PC-3 (cell line): ENCODE measurements at regions of chr3 and their contacts with region 1.

Region 1: DNA sequence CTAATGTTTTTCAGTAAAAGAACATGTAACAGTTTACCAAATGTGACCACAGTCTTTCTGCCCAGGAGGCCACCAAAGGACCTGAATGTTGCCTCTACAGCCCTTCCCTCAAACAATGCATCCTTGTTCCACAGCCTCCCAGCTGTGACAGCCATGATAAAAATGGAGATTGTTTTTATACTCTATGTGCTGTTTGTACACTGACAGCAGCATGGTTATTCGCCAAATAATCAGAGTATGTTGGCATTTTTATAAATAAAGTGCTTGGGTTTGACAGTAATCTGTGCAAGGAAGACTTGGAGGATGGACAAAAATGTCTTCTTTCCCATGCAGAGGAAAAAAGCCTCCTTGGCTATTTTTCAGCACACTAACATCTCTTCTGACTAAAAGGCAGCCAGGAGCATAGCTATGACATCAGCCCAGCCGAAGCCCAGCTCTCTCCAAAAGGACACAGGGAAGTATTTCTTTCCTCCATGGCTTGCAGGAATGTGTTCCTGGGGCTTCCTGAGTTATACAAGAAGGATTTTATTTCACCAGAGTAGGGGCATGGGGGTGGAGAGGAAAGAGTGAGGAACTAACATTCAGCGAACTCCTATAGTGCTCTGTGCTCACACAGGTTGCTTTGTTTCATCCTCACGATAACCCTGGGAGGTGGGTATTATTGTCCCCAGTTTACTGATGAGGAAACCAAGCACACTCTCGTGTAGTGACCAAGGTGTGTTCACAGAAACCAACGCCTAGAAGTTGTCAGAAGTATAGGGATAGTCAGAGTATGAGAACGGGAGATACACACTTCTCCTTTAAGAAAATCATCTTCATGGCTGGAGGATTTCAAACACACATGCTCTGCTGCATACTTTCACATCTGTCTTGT is 339.7 kb downstream of the MECOM start:
- DNase-seq: no peak
- ATAC-seq: no peak
- H3K4me3 ChIP-seq: no peak overlapping the region
- H3K27ac ChIP-seq: no peak overlapping the region
- H3K4me1 ChIP-seq: peaks cover 34% of the 10 kb centered on the region
- H3K27me3 ChIP-seq: no peaks in the 10 kb centered on the region
- CTCF ChIP-seq: no peak

Region 2: DNA sequence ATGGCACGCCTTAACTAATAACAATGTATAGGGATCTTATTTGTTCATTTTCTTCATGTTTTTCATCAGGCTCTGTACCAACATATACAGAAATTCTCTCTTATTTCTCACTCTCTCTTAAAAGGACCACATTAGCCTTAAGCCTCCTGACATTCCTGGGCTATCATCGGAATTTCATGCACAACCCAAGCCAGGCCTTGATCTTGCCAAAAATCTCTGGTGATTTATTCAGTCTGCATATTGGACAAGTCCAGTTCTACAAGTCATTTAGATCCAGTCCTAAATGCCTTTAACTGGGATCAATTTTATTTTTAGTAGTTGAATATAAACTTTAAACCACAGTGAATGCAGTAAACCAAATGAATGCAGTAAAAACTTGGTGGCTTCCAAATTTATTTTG is 45.7 kb before region 1 on chr3:
- CTCF ChIA-PET with region 1: no interaction called
- POLR2A ChIA-PET with region 1: interaction called, 5 read pairs
- intact Hi-C with region 1: loop called (anchors 1 kb)
- DNase-seq: no peak
- ATAC-seq: no peak
- H3K4me3 ChIP-seq: no peak overlapping the region
- H3K27ac ChIP-seq: no peak overlapping the region
- H3K4me1 ChIP-seq: peaks cover 29% of the 10 kb centered on the region
- H3K27me3 ChIP-seq: no peaks in the 10 kb centered on the region
- CTCF ChIP-seq: no peak

Region 3: GRCh38 chr3:169305460-169305859 is 18.4 kb before region 1 on chr3:
- CTCF ChIA-PET with region 1: no interaction called
- POLR2A ChIA-PET with region 1: no interaction called
- intact Hi-C with region 1: no loop called
- DNase-seq: no peak
- ATAC-seq: no peak
- H3K4me3 ChIP-seq: no peak overlapping the region
- H3K27ac ChIP-seq: no peak overlapping the region
- H3K4me1 ChIP-seq: peaks cover 4% of the 10 kb centered on the region; the same call in 1 of the 2 replicates
- H3K27me3 ChIP-seq: no peaks in the 10 kb centered on the region
- CTCF ChIP-seq: no peak

Region 4: GRCh38 chr3:169334991-169335390 is 11.2 kb after region 1 on chr3:
- CTCF ChIA-PET with region 1: no interaction called
- POLR2A ChIA-PET with region 1: interaction called, 25 read pairs
- intact Hi-C with region 1: no loop called
- DNase-seq: no peak
- ATAC-seq: no peak
- H3K4me3 ChIP-seq: no peak overlapping the region
- H3K27ac ChIP-seq: no peak overlapping the region
- H3K4me1 ChIP-seq: peaks cover 37% of the 10 kb centered on the region
- H3K27me3 ChIP-seq: no peaks in the 10 kb centered on the region
- CTCF ChIP-seq: no peak

Region 5: DNA sequence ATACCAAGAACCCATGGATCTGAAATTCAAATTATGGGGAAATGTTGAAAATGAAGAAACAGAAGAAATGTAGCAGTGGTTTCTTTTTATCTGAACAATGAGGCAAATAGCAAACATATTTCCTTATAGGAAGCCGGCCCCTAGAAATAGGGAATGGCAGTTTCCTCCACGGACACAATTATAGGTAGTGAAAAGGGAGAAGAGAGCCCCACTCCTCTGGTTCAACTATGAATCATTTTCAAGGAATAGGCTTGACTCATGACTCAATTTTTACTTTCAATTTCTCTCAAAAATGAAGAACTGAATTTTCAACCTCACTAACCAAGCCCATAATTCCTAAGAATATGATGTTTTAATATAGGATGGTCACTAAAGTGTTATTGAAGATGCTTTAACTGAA is 96.6 kb after region 1 on chr3:
- CTCF ChIA-PET with region 1: no interaction called
- POLR2A ChIA-PET with region 1: no interaction called
- intact Hi-C with region 1: no loop called
- DNase-seq: peak; percentile 18
- ATAC-seq: no peak
- H3K4me3 ChIP-seq: no peak overlapping the region
- H3K27ac ChIP-seq: no peak overlapping the region
- H3K4me1 ChIP-seq: peaks cover 8% of the 10 kb centered on the region; the same call in 1 of the 2 replicates
- H3K27me3 ChIP-seq: no peaks in the 10 kb centered on the region
- CTCF ChIP-seq: no peak

Region 6: DNA sequence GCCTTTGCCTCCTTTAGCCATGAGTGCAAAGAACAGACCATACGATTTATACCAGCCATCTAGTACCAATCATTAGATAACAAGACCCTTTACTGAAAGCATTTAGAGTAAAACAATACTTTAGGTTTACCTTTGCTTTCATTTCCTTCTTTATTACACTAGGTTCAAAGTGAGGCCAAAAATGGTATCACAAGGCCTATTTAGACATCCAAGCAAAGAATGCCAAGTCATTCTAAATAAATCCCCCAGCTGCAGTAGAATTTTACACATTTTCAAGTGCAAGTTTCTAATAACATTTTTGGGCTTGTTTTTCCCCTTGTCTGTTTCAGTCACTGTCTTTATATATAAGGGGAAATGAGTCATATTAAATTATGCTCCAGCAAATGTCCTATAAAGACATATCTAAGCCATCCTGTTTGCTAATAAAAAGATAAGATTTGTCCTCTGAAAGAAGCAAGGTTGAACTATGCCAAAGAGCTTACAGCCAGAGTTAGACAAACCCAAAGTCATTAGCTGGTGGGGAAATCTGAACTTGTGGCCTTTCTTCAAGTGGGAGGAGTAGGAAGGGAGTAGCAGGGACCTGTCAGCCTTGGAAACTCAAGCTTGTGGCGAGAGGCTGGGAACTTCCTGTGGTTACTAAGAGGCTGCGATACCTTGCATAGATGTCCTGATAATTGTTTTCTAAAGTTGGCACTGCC is 107.0 kb after region 1 on chr3:
- CTCF ChIA-PET with region 1: no interaction called
- POLR2A ChIA-PET with region 1: no interaction called
- intact Hi-C with region 1: loop called (anchors 2 kb)
- DNase-seq: peak; percentile 89
- ATAC-seq: peak; percentile 93
- H3K4me3 ChIP-seq: peak overlapping the region; percentile 18; the same call in 1 of the 2 replicates
- H3K27ac ChIP-seq: peak overlapping the region; percentile 89
- H3K4me1 ChIP-seq: peaks cover 41% of the 10 kb centered on the region
- H3K27me3 ChIP-seq: no peaks in the 10 kb centered on the region
- CTCF ChIP-seq: no peak

Region 7: DNA sequence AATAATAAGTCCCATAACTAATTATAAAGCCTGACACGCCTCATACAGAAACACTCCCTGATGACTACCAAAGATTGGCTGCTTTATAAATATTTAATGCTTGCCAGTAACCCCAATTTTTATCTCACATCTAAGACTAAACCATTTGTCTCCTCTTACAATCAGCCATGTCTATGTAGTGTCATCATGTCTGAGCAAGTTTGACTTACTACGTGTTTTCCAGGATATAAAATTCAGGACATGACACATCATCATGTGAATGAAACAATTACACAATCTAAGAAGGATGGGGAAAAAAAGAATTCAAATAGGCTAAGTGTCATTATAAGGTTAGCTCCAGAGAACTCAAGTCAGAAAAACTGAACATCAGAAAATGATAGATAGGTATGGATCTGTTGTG is 131.0 kb after region 1 on chr3:
- CTCF ChIA-PET with region 1: no interaction called
- POLR2A ChIA-PET with region 1: interaction called, 14 read pairs
- intact Hi-C with region 1: no loop called
- DNase-seq: peak; percentile 82
- ATAC-seq: peak; percentile 77
- H3K4me3 ChIP-seq: no peak overlapping the region
- H3K27ac ChIP-seq: peak overlapping the region; percentile 75
- H3K4me1 ChIP-seq: peaks cover 25% of the 10 kb centered on the region
- H3K27me3 ChIP-seq: no peaks in the 10 kb centered on the region
- CTCF ChIP-seq: no peak

Region 8: DNA sequence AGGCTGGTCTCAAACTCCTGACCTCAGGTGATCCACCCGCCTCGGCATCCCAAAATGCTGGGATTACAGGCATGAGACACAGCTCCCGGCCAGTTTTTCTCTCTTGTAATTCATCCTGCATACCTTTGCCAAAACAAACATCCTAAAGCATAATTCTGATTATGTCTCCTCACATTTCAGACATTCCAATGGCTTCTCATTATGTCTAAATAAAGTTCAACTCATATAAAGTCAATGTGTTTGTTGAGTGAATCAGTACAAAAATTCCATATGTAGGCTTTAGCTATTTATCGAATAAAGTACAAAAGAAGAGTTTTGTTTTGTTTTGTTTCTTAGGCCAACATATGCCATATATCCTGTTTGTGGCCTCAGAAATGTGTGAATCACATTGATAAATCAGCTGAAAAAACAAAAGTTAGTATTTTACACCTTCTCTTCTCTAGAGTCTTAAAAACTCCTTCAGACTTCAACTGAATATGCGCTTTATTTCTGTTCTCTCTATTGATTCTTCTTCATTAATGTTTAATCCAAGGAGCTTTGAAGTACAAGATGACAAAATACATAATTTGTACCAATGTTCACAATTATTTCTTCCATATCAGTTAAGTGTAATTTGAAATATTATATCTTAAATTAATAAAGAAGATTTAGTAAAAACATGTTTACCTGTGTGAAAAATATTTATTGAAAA is 173.9 kb after region 1 on chr3:
- CTCF ChIA-PET with region 1: no interaction called
- POLR2A ChIA-PET with region 1: no interaction called
- intact Hi-C with region 1: loop called (anchors 1 kb)
- DNase-seq: peak; percentile 95
- ATAC-seq: peak; percentile 91
- H3K4me3 ChIP-seq: peak overlapping the region; percentile 12; the same call in 1 of the 2 replicates
- H3K27ac ChIP-seq: peak overlapping the region; percentile 44
- H3K4me1 ChIP-seq: peaks cover 19% of the 10 kb centered on the region
- H3K27me3 ChIP-seq: no peaks in the 10 kb centered on the region
- CTCF ChIP-seq: no peak